Activated B cell treated with CpG ODN at 0.5 μM for 24 hours (primary cell): ENCODE measurements at regions of chr10 and their contacts with region 1.

Region 1: DNA sequence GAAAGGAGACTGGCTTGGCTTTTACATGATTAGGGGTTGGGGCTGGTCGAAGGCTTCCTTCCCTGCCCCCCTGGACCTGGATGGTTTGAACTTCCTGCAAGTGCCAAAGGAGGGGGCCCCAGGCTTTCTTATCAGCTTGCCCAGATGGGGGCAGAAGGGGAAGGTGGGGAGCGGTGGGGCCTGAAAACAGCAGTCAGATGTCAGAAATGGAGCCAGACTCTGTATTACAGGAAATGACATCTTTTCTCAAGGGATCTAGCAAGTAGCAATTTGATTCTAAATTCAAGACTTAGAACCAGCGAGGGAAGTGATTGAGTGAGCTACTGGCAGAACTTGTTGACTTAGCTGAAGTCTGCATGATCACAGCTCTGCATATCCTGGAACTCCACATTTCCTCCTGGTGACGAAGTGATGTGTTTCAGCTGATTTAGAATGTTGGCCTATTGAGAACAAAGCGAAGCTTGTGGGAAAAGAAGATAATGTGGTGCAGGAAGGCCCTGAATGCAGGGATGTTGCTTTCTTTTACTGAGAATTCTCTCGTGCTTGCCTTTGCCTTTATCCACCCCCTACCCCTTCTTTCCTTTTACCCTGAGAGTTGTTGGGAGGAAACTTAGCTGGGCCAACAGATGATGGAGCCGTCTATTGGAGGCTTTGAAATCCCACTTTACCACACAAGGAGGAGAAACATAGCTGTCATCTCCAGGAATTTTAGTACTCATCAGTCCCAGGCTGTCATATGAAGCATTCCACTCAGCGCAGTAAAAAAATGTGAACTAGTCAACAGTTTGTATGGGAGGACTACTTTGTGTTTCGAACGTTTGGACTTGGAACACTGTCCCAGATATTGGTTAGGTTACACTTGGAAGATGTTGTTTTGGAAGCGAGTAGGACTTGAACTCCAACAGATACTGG is 43.2 kb downstream of the CCNY start:
- DNase-seq: peak; percentile 49
- ATAC-seq: peak; percentile 96
- H3K4me3 Mint-ChIP-seq: peak overlapping the region; percentile 68
- H3K27ac Mint-ChIP-seq: peak overlapping the region; percentile 91
- H3K4me1 Mint-ChIP-seq: peaks cover 58% of the 10 kb centered on the region
- H3K27me3 Mint-ChIP-seq: no peaks in the 10 kb centered on the region
- CTCF ChIP-seq: no peak

Region 2: GRCh38 chr10:35126530-35127296 is 252.8 kb before region 1 on chr10 and contains the start of gene CREM:
- CTCF ChIA-PET with region 1: no interaction called
- POLR2A ChIA-PET with region 1: interaction called, 6 read pairs
- intact Hi-C with region 1: loop called (anchors 1 kb)
- DNase-seq: peak; percentile 96
- ATAC-seq: peak; percentile 85
- H3K4me3 Mint-ChIP-seq: peak within 1 kb of the TSS; percentile 93
- H3K27ac Mint-ChIP-seq: peak within 1 kb of the TSS; percentile 98
- H3K4me1 Mint-ChIP-seq: peaks cover 38% of the 10 kb centered on the region
- H3K27me3 Mint-ChIP-seq: no peaks in the 10 kb centered on the region
- CTCF ChIP-seq: peak; percentile 28
- total RNA-seq, gene CREM: 75.3 and 86.4 TPM in 2 replicates

Region 3: DNA sequence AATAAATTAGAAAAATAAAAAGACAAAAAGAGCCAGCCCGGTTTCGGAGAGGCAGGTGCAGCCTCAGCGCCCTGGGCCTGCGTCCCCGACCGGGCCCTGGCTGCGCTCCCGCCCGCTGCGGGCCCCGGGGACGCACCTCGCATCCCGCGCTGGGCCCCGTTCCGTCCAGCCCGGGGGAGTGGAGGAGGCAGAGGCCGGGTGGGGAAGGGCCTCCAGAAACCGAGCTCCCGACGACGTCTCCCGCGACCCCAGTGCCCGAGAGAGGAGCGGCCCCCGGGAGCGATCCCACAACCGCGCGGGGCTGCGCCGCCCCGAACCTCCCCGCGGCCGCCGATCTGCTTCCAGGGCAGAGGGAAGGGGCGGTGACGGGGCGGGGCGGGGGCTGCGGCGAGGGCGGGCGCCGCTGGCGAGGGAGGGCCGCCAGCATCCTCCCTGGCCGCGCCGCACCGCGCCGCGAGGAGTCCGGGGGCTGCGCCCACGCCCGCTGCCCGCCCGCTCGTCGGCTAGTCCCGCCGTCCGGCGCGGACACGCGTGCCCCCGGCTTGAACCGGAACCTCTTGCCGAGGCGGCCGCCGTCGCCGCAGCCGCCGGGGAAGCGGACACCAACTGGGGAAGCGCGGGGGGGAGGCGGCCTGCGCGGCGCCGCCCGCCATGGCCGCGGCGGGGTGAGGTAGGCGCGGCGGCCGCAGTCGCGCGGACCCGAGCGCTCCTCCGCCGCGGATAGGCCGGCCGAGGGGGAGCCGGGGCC is 43.2 kb before region 1 on chr10 and contains the start of gene CCNY:
- CTCF ChIA-PET with region 1: interaction called, 4 read pairs
- POLR2A ChIA-PET with region 1: interaction called, 4 read pairs
- intact Hi-C with region 1: loop called (anchors 1 kb)
- DNase-seq: peak; percentile 79
- ATAC-seq: peak; percentile 86
- H3K4me3 Mint-ChIP-seq: peak within 1 kb of the TSS; percentile 88
- H3K27ac Mint-ChIP-seq: peak within 1 kb of the TSS; percentile 74
- H3K4me1 Mint-ChIP-seq: peaks cover 63% of the 10 kb centered on the region
- H3K27me3 Mint-ChIP-seq: no peaks in the 10 kb centered on the region
- CTCF ChIP-seq: no peak
- total RNA-seq, gene CCNY: 68.5 and 69.2 TPM in 2 replicates

Region 4: GRCh38 chr10:35398355-35398754 is 18.9 kb after region 1 on chr10:
- CTCF ChIA-PET with region 1: interaction called, 3 read pairs
- POLR2A ChIA-PET with region 1: no interaction called
- intact Hi-C with region 1: loop called (anchors 1 kb)
- DNase-seq: no peak
- ATAC-seq: no peak
- H3K4me3 Mint-ChIP-seq: no peak overlapping the region
- H3K27ac Mint-ChIP-seq: no peak overlapping the region
- H3K4me1 Mint-ChIP-seq: peaks cover 56% of the 10 kb centered on the region
- H3K27me3 Mint-ChIP-seq: no peaks in the 10 kb centered on the region
- CTCF ChIP-seq: no peak

Region 5: DNA sequence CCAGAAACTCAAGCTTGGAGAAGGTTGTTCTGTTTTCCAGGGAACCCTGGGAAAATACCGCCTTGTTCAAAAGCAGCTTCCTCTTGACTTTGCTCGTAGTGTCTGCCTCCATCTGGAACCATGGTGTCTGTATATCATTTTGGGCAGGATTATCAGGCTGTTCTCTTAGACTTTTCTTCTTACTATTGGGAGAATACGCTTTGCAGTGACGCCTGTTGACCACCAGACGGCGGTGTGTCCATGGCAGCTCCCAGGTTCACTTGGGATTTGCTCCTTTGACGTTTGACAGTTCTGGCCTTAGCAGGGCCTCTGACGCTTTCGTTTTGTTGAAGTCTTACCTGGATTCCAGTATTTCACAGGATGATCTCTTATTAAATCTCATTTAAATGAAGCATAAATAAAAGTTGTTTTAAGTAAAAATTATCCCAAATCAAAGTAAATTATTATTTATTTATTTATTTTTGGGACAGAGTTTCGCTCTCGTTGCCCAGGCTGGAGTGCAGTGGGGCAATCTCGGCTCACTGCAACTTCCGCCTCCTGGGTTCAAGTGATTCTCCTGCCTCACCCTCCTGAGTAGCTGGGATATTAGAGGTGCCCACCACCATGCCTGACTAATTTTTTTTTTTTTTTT is 183.9 kb after region 1 on chr10:
- CTCF ChIA-PET with region 1: interaction called, 18 read pairs
- POLR2A ChIA-PET with region 1: no interaction called
- intact Hi-C with region 1: loop called (anchors 1 kb)
- DNase-seq: no peak
- ATAC-seq: peak; percentile 61
- H3K4me3 Mint-ChIP-seq: no peak overlapping the region
- H3K27ac Mint-ChIP-seq: no peak overlapping the region
- H3K4me1 Mint-ChIP-seq: peaks cover 16% of the 10 kb centered on the region
- H3K27me3 Mint-ChIP-seq: no peaks in the 10 kb centered on the region
- CTCF ChIP-seq: peak; percentile 99

Region 6: DNA sequence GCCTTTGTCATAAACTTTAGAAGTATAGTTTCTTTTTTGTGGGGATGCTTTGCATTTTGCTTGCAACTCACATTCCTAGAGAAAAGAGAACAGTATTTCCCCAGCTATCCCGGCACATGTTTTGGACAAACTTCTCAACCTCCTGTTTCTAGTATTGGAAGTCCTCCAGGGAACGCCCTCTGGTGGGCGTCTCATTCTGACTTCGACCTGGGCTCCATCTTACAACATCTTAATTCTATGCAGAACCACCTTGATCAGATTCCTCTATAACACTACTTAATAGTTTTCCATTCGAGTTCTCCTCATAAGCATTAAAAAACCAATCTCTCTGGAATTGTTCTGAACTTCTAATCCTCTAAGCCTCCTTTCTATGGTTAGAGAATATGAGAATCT is 402.2 kb after region 1 on chr10:
- CTCF ChIA-PET with region 1: no interaction called
- POLR2A ChIA-PET with region 1: no interaction called
- intact Hi-C with region 1: loop called (anchors 1 kb)
- DNase-seq: no peak
- ATAC-seq: no peak
- H3K4me3 Mint-ChIP-seq: no peak overlapping the region
- H3K27ac Mint-ChIP-seq: no peak overlapping the region
- H3K4me1 Mint-ChIP-seq: no peaks in the 10 kb centered on the region
- H3K27me3 Mint-ChIP-seq: peaks cover 3% of the 10 kb centered on the region
- CTCF ChIP-seq: no peak

Region 7: DNA sequence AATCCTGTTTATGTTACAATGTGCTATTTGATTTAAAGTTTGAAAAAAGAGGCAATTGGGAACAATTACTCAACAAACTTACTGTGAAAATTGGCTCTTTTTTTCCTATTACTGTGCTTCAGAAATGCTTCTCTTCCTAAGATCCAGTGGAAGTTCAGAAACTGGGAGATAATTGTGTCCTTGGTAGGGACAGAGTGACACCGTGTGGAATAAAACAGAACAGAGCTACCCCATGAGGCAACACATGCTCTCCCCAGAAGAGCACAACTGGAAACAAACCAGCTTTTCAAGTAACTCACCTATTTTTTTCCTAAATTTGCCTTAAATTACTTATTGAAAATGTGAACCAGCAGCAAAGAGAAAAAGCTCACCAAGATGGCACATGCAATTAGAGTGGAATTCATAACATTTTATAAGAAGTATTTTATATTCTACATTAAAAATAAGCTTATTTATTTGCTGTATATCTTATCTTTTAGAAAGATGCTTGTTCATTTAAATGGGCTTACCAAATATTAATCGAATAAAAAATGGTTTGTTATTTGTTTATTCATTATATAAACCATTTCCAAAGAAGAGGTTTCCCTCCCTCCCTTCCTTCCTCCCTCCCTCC is 1399.9 kb after region 1 on chr10:
- CTCF ChIA-PET with region 1: no interaction called
- POLR2A ChIA-PET with region 1: no interaction called
- intact Hi-C with region 1: loop called (anchors 2 kb)
- DNase-seq: no peak
- ATAC-seq: no peak
- H3K4me3 Mint-ChIP-seq: no peak overlapping the region
- H3K27ac Mint-ChIP-seq: no peak overlapping the region
- H3K4me1 Mint-ChIP-seq: no peaks in the 10 kb centered on the region
- H3K27me3 Mint-ChIP-seq: peaks cover 1% of the 10 kb centered on the region
- CTCF ChIP-seq: no peak